ENCODE measurements at regions of chr12 and their contacts with region 1.

Region 1: GRCh38 chr12:21434704-21435103 is 2.8 kb upstream of the PYROXD1 start:
- DNase-seq: no peak
- ATAC-seq: no peak
- H3K4me3 ChIP-seq: no peak overlapping the region
- H3K27ac ChIP-seq: no peak overlapping the region
- H3K4me1 ChIP-seq: peaks cover 3% of the 10 kb centered on the region
- H3K27me3 ChIP-seq: no peaks in the 10 kb centered on the region; the same call in 1 of the 2 replicates
- CTCF ChIP-seq: no peak

Region 2: GRCh38 chr12:21677622-21678277 is 243.0 kb after region 1 on chr12:
- CTCF ChIA-PET with region 1: no interaction called
- POLR2A ChIA-PET with region 1: interaction called, 10 read pairs
- in situ Hi-C with region 1: no loop called
- intact Hi-C with region 1: no loop called
- DNase-seq: no peak
- ATAC-seq: no peak
- H3K4me3 ChIP-seq: no peak overlapping the region
- H3K27ac ChIP-seq: no peak overlapping the region
- H3K4me1 ChIP-seq: no peaks in the 10 kb centered on the region
- H3K27me3 ChIP-seq: no peaks in the 10 kb centered on the region
- CTCF ChIP-seq: no peak

Measured in Panc1 (cell line).